CD4-positive, alpha-beta T cell (primary cell): ENCODE measurements at regions of chr14 and their contacts with region 1.

Region 1: DNA sequence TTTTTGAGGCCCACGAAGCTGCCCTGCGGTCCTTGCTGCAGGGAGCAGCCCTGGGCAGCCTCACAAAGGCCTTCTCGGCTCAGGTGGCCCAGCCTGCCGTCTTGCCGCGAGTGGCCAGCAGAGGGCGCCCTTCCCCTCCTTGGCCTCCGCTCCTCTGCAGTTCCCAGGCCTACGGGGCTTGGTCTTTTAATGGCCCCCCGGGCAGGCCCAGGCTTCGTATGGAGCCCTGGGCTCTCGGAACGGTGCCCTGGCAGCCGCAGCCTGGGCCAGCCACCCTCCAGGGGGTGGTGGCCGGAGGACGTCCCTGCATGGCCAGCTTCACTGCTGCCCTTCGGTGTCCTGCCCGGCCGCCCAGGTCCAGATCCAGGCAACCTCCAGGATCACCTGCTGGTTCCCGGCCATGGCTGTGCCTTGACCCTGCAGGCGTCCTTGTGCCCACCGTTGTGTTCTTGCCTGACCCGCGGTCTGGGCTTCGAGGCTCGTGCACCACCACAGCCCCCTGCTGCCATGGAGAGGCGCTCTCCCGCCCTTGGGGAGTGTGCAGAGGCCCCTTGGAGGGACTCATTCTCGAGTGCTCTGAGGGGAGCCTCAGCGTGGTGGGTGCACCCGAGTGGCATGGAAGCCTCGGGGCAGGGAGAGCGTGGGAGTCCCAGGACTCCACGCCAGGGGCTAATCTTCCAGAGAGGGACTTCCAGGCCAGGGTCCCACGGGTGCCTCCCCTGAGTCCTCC is 9.4 kb downstream of the ASPG start:
- DNase-seq: peak; percentile 50 to 83 (median 68)
- ATAC-seq: peak; percentile 77
- H3K4me3 ChIP-seq: no peak overlapping the region
- H3K4me3 Mint-ChIP-seq: no peak overlapping the region
- H3K27ac ChIP-seq: no peak overlapping the region
- H3K27ac Mint-ChIP-seq: no peak overlapping the region
- H3K4me1 ChIP-seq: peaks cover 11% of the 10 kb centered on the region
- H3K4me1 Mint-ChIP-seq: peaks cover 5% of the 10 kb centered on the region
- H3K27me3 ChIP-seq: no peaks in the 10 kb centered on the region
- H3K27me3 Mint-ChIP-seq: peaks cover 4% of the 10 kb centered on the region
- CTCF ChIP-seq: peak; percentile 81

Region 2: GRCh38 chr14:104119488-104120251 is 24.8 kb after region 1 on chr14:
- CTCF ChIA-PET with region 1: no interaction called
- POLR2A ChIA-PET with region 1: no interaction called
- intact Hi-C with region 1: no loop called
- DNase-seq: no peak
- ATAC-seq: no peak
- H3K4me3 ChIP-seq: no peak overlapping the region
- H3K4me3 Mint-ChIP-seq: no peak overlapping the region
- H3K27ac ChIP-seq: no peak overlapping the region
- H3K27ac Mint-ChIP-seq: no peak overlapping the region
- H3K4me1 ChIP-seq: peaks cover 4% of the 10 kb centered on the region
- H3K4me1 Mint-ChIP-seq: no peaks in the 10 kb centered on the region
- H3K27me3 ChIP-seq: peaks cover 25 to 39% of the 10 kb centered on the region in 2 experiments
- H3K27me3 Mint-ChIP-seq: peaks cover 37% of the 10 kb centered on the region
- CTCF ChIP-seq: no peak

Region 3: GRCh38 chr14:104563742-104564615 is 469.1 kb after region 1 on chr14:
- CTCF ChIA-PET with region 1: interaction called, 4 read pairs
- POLR2A ChIA-PET with region 1: no interaction called
- intact Hi-C with region 1: loop called (anchors 5 kb)
- DNase-seq: peak; percentile 57 to 80 (median 66)
- ATAC-seq: peak; percentile 82
- H3K4me3 ChIP-seq: no peak overlapping the region
- H3K4me3 Mint-ChIP-seq: no peak overlapping the region
- H3K27ac ChIP-seq: no peak overlapping the region
- H3K27ac Mint-ChIP-seq: no peak overlapping the region
- H3K4me1 ChIP-seq: peaks cover 7% of the 10 kb centered on the region
- H3K4me1 Mint-ChIP-seq: no peaks in the 10 kb centered on the region
- H3K27me3 ChIP-seq: peaks cover 5 to 19% of the 10 kb centered on the region in 2 experiments
- H3K27me3 Mint-ChIP-seq: peaks cover 16% of the 10 kb centered on the region
- CTCF ChIP-seq: peak; percentile 74

Region 4: DNA sequence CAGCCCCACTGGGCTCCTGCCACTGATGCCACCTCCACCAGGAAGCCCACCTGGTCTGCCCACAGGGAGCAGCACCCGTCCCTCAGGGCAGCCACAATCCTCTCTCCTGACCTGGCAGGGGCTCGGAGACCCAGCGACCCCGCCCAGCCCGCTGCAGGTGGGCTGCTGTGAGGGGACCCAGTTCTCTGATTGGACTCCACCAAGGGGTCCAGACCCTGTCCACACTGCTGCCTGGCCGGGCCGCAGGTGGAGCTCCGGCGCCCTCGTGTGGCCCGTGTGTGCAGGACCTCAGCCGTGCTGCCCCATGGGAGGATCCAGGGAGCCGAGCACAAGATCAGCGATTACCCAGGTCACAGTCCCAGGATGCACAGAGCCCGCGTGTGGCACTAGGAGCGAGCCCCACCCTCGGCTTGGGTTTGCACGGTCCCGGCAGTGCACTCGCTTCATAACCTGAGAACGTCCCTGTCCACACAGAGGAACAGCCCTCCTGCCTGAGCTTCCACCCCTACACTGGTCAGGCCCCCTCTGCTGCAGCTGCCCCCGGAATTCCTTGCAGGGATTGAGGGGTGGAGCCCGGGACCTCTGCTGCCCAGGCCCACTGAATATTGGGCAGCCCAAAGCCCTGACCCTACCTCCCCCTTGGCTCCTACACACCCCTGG is 545.1 kb after region 1 on chr14:
- CTCF ChIA-PET with region 1: no interaction called
- POLR2A ChIA-PET with region 1: no interaction called
- intact Hi-C with region 1: loop called in 1 of 2 experiments (anchors 5 kb)
- DNase-seq: peak in 12 of 14 experiments; percentile 18 to 68 (median 38)
- ATAC-seq: peak; percentile 73
- H3K4me3 ChIP-seq: no peak overlapping the region
- H3K4me3 Mint-ChIP-seq: no peak overlapping the region
- H3K27ac ChIP-seq: no peak overlapping the region
- H3K27ac Mint-ChIP-seq: no peak overlapping the region
- H3K4me1 ChIP-seq: peaks cover 6% of the 10 kb centered on the region
- H3K4me1 Mint-ChIP-seq: peaks cover 4% of the 10 kb centered on the region
- H3K27me3 ChIP-seq: peaks cover 6 to 13% of the 10 kb centered on the region in 2 experiments
- H3K27me3 Mint-ChIP-seq: peaks cover 15% of the 10 kb centered on the region
- CTCF ChIP-seq: peak; percentile 66